Aorta (tissue), 5 donors: ENCODE measurements at regions of chr17 and their contacts with region 1.

Region 1: DNA sequence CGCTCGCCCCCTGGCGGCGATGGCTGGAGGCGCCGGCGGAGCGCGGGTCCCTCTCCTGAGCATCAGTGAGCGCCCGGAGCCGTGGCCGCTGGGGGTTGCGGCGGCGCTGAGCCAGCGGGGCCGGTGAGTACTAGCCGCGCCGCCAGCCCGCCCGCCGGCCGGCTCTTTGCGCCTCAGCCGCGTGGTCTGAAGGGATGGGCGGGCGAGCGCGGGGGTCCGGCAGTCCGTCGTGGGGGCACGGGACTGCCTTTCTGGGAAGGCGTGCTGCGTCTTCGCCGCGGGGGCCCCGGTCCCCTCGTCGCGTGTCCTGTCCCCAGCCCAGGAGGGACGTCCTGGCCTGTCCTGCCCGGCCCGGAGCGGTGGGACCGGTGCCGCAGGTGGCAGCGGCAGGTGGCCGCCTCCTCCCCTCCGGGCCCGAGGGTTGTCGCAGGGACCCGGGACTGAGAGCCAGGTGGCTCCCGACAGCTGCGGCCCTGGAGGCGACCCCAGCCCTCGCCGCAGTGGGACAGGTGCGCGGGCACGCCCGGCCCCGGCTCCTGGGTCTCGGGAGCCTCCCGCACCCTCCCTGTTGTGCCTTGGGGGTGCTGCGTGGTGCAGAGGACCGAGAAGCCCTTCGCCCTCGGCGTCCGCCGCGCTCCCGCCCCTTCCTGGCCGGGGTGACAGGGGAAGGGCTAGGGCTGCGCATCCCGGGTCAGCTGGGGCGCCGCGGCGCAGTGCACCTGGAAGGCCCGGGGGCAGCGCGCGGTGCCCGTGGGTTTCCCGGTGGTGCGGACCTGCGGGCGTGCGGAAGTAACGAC is at the start of gene SPECC1:
- DNase-seq: peak; percentile 86 to 95
- ATAC-seq: peak; percentile 99
- H3K4me3 ChIP-seq: peak within 1 kb of the TSS; percentile 51 to 67
- H3K27ac ChIP-seq: peak within 1 kb of the TSS in 1 of 2 donors; percentile 33
- H3K4me1 ChIP-seq: no peaks in the 10 kb centered on the region
- H3K27me3 ChIP-seq: no peaks in the 10 kb centered on the region
- total RNA-seq, gene SPECC1: 61.8 to 68.8 TPM

Region 2: DNA sequence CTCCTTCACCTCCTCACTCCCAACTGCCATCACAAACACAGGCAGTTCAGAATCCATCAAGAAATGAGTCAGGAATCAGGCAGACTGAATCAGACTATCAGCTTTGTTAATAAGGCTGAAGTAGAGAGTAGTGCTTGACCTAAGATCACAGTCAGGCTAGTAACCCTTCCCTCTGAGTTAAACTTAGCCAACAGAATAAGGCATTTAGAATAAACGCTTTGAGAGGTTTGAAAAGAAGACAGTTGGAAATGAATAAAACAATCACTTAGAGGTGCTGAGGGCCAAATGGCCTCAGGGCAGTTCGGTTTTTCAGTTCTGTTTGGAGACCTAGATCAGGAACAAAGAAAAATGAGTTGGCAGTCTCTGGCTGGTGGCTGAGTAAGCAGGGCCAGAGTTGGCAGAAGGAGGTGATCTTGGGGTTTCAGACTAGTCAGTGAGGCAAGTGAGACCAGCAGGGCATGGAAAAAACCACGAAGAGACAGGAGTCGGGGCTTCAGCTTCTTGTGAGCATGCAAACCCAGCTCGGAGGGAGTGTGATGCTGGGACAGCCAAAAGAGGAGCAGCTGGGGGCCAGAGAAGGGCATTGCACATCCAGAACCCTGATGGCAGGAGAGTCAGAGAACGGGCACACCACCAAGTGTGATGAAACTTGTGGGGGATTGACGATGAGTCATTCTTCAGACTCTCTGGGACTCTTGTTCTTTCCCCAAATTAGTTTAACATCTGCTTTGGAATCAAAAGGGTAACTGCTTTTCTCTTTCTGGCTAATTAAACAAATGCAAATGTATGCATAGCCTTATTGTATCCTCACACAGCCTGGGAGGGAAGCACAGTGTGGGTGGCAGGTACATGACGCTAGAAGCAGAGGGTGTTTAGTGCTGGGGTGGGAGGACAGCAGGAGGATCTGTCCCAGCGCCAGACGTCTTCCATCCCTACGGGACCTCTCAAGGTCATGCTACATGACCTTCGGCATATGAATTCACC is 54.5 kb after region 1 on chr17:
- intact Hi-C with region 1: loop called in 1 of 2 experiments (anchors 5 kb)
- DNase-seq: peak; percentile 90
- ATAC-seq: peak; percentile 88
- H3K4me3 ChIP-seq: no peak overlapping the region
- H3K27ac ChIP-seq: peak overlapping the region; percentile 96 to 98
- H3K4me1 ChIP-seq: peaks cover 0 to 4% of the 10 kb centered on the region in 2 donors
- H3K27me3 ChIP-seq: no peaks in the 10 kb centered on the region

Region 3: GRCh38 chr17:20095336-20096080 is 86.0 kb after region 1 on chr17:
- intact Hi-C with region 1: loop called (anchors 2 to 5 kb)
- DNase-seq: peak; percentile 83 to 90
- ATAC-seq: peak; percentile 74
- H3K4me3 ChIP-seq: no peak overlapping the region
- H3K27ac ChIP-seq: peak overlapping the region in 1 of 2 donors; percentile 12
- H3K4me1 ChIP-seq: peaks cover 1 to 13% of the 10 kb centered on the region in 2 donors
- H3K27me3 ChIP-seq: no peaks in the 10 kb centered on the region

Region 4: DNA sequence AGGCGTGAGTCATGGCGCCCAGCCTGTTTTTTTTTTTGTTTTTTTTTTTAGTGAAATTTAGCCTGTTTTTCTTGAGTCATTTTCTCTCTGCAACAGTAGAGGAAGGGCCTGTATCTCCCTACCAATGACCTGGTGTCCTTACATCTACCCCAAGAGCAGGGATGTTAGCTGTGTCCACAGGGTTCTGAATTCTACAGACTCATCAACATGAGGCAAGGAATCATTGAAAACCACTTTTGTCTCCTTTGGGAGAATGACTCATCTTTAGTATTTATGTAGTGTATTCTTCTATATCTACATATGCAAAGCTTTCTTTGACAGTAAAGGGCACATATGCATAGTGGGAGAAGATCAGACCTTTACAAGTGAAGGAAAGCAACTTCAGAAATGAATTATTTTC is 105.0 kb after region 1 on chr17:
- intact Hi-C with region 1: loop called in 1 of 2 experiments (anchors 5 kb)
- DNase-seq: no peak
- ATAC-seq: no peak
- H3K4me3 ChIP-seq: no peak overlapping the region
- H3K27ac ChIP-seq: no peak overlapping the region
- H3K4me1 ChIP-seq: no peaks in the 10 kb centered on the region
- H3K27me3 ChIP-seq: no peaks in the 10 kb centered on the region

Region 5: DNA sequence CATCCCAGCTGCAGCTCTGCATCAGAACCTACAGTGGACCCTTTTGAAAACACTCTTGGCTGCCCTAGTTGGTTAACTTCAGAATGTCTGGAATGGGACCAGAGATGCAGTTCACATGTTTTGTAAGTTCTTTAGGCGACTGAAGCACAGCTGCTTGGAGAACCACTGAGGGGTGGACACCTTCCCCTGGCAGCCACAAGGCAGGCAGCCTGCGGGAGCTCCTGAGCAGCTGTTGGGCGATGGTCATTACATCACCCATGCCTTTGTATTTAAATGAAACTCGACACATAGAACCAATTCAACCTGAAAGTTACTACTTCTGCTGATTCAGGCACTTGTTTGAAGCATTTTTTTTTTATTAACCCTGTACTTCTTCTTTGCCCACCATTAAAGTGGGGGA is 306.3 kb after region 1 on chr17:
- intact Hi-C with region 1: loop called in 1 of 2 experiments (anchors 10 kb)
- DNase-seq: no peak
- ATAC-seq: no peak
- H3K4me3 ChIP-seq: no peak overlapping the region
- H3K27ac ChIP-seq: no peak overlapping the region
- H3K4me1 ChIP-seq: no peaks in the 10 kb centered on the region
- H3K27me3 ChIP-seq: no peaks in the 10 kb centered on the region